Cardiac septum (tissue), 1 donor: ENCODE measurements at regions of chr1 and their contacts with region 1.

Region 1: DNA sequence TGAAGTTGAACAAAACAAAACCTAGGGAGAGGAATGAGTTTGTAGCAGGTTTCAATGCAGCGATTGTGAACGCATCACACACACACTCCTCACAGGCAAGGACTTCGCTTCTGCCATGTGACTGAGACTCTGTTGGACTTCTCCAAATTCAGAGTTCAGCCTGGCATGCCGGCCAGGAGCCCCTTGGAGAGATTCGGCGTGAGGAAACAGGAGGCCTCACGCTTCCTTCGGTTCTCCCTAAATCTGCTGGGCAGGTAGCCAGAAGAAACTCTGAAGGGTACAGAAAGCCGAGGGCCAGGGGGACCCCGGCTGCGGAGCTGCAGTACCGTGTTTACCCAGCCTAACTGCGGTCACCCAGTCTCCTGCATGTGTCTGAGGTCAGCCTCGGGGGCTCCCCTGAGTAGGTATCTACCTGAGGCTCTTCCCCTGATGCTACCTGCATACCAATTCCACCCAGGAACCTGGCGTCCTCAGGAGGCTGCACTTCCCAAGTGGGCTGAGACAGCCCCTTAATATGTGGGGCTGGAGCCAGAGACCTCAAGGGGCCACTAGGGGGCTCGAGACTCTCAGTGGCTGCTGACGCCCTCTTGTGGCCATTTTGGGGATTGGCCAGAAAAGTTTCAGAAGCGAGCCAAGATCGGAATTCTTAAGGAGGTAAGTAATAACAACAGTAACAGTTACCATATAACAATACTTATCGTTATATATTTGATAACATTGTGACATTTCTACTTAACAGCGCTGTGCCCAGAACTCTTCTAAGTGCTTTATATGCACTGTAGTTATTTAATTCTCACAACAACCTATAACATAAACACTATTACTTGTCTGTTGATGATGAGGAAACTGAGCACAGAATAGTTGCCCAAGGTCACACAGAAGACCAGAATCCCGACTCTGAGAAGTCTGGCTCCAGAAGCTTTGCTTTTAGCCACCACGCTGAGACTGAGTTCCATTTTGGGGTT is 2.7 kb upstream of the ANXA9 start:
- DNase-seq: peak; percentile 88

Region 2: DNA sequence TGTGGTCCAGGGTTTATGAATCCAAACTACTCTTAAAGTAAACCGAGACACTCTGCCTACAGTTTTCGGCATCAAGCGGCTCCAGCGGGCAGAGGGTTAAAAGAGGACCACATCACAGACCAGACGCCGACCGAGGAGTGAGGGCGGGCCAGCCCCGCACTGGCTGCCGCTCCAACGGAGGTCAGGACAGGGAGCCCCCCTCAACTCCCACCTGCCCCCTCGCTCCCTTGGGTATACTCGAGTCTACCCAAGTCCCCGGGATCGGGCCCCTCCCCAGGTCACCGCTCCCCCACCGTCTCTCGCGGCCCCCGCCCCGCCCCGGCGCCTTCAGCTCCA is 103.3 kb before region 1 on chr1:
- intact Hi-C with region 1: loop called (anchors 5 kb)
- DNase-seq: no peak

Region 3: GRCh38 chr1:151006327-151007052 is 27.1 kb after region 1 on chr1 and contains the start of gene MINDY1:
- intact Hi-C with region 1: loop called (anchors 2 kb)
- DNase-seq: peak; percentile 89
- total RNA-seq, gene MINDY1: 49.1 TPM